ENCODE measurements at regions of chr11 and their contacts with region 1.

Region 1: GRCh38 chr11:63553741-63554151 is 9.4 kb downstream of the PLAAT2 start:
- DNase-seq: peak; percentile 77
- H3K4me3 Mint-ChIP-seq: peak overlapping the region; percentile 59
- H3K27ac Mint-ChIP-seq: peak overlapping the region; percentile 83
- H3K4me1 Mint-ChIP-seq: peaks cover 48% of the 10 kb centered on the region
- H3K27me3 Mint-ChIP-seq: no peaks in the 10 kb centered on the region

Region 2: DNA sequence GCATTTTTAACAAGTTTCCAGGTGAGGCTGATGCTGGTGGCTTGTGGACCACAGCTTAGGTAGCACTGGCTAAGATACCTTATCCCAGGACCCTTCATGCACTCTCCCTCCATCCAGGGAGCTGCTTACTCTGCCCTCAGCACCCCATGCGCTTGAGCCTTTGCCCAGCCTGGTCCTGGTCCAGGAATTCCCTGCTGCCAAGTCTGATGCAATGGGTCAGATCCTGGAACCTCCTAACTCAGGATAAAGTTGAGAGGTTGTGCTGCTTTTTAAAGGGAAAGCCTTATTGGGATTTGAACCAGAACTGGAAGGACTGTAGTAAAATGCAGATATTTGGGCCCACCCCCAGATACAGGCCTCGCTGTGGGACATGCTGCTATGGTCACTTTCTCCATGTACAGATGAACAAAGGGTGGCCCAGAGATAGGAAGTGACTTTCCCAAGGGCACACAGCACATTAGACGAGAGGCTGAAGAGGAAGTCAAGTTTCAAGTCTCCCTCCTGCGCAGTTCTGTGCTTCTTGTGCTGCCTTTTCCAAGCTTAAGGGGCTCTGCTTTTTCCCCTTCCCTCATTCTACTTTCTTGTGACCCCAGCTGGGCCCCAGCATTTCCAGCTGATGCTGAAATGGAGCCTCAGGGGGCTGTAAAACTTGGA is 48.7 kb before region 1 on chr11:
- CTCF ChIA-PET with region 1: no interaction called
- intact Hi-C with region 1: no loop called
- DNase-seq: no peak
- H3K4me3 Mint-ChIP-seq: no peak overlapping the region
- H3K27ac Mint-ChIP-seq: no peak overlapping the region
- H3K4me1 Mint-ChIP-seq: peaks cover 6% of the 10 kb centered on the region
- H3K27me3 Mint-ChIP-seq: no peaks in the 10 kb centered on the region

Region 3: DNA sequence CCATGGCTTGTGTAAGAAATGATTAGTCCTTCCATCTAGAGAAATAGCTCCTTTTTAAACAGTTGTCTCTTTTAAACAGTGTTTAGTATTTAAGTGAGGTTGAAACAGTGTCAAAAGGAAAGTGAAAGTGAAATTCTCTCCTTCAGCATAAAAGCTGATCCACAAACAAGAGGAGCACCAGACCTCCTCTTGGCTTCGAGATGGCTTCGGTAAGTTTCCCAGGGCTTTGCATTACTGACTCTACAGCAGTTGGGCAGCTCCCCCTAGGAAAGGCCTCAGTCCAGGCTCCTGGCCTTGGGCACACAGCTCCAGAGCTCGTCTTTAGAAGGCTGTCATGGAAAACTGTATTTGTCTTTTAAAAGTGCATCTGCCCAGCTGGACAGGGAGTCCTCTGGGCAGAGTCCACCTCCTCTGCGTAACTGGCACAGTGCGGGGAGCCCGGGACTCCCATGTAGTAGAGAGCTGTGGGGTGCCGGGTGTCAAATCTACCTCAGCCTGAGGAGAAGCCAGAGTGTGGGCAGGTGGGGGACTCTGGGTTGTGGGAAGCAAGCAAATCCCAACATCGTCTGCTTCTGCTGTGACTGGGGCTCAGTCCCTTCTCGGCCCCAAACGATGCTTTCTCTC is 17.0 kb before region 1 on chr11 and contains the start of gene PLAAT4:
- CTCF ChIA-PET with region 1: interaction called, 9 read pairs
- intact Hi-C with region 1: loop called (anchors 1 kb)
- DNase-seq: peak; percentile 42
- H3K4me3 Mint-ChIP-seq: peak within 1 kb of the TSS; percentile 72
- H3K27ac Mint-ChIP-seq: peak within 1 kb of the TSS; percentile 69
- H3K4me1 Mint-ChIP-seq: peaks cover 76% of the 10 kb centered on the region
- H3K27me3 Mint-ChIP-seq: no peaks in the 10 kb centered on the region
- total RNA-seq, gene PLAAT4: 16.1 to 16.6 TPM

Region 4: GRCh38 chr11:63614136-63614664 is 60.5 kb after region 1 on chr11 and contains the start of gene PLAAT3:
- CTCF ChIA-PET with region 1: no interaction called
- intact Hi-C with region 1: loop called (anchors 5 kb)
- DNase-seq: peak; percentile 40
- H3K4me3 Mint-ChIP-seq: peak within 1 kb of the TSS; percentile 80
- H3K27ac Mint-ChIP-seq: no peak within 1 kb of the TSS
- H3K4me1 Mint-ChIP-seq: peaks cover 5% of the 10 kb centered on the region
- H3K27me3 Mint-ChIP-seq: no peaks in the 10 kb centered on the region
- total RNA-seq, gene PLAAT3: 3.5 to 3.7 TPM

Region 5: DNA sequence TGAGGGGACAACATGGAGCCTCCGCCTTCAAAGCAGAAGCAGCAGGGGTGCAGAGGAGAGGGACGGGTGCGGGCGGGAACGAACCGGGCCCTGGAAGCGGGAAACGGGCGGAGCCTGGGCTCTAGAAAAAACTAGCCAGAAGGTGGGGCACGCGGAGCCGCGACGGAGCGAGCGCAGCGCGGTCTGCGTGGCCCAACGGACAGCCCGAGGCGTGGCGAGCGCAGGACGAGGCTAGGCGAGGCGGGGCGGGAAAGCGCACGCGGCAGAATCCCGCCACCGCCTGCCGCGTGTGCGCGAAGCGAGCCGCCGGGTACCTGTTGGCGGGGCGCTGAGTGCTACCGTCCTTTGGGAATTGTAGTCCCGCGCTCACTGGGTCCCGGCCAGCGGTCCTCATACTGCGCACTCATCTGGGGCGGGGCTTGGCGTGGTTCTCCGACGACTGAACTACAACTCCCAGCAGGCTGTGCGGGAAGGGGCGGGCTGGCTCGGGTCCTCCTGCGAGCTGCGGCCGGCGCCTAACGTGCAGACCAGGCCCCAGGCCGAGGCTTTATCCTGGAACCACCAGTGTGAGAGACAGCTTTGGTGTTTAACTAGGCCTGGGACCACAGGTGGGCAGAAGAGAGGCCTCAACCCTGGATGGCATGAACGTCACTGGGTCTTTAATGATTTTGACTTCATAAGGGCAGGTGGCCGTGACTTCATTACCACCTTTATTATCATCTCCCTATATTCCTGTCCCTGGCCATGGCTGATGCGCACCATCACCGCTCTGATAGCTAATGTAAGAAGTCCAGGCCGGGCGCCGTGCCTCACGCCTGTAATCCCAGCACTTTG is 117.8 kb after region 1 on chr11 and contains the start of gene ATL3:
- CTCF ChIA-PET with region 1: no interaction called
- intact Hi-C with region 1: loop called (anchors 5 kb)
- DNase-seq: peak; percentile 93
- H3K4me3 Mint-ChIP-seq: peak within 1 kb of the TSS; percentile 84
- H3K27ac Mint-ChIP-seq: peak within 1 kb of the TSS; percentile 83
- H3K4me1 Mint-ChIP-seq: peaks cover 39% of the 10 kb centered on the region
- H3K27me3 Mint-ChIP-seq: no peaks in the 10 kb centered on the region
- total RNA-seq, gene ATL3: 19.5 to 21.0 TPM